Caco-2 (cell line): ENCODE measurements at regions of chr2 and their contacts with region 1.

Region 1: DNA sequence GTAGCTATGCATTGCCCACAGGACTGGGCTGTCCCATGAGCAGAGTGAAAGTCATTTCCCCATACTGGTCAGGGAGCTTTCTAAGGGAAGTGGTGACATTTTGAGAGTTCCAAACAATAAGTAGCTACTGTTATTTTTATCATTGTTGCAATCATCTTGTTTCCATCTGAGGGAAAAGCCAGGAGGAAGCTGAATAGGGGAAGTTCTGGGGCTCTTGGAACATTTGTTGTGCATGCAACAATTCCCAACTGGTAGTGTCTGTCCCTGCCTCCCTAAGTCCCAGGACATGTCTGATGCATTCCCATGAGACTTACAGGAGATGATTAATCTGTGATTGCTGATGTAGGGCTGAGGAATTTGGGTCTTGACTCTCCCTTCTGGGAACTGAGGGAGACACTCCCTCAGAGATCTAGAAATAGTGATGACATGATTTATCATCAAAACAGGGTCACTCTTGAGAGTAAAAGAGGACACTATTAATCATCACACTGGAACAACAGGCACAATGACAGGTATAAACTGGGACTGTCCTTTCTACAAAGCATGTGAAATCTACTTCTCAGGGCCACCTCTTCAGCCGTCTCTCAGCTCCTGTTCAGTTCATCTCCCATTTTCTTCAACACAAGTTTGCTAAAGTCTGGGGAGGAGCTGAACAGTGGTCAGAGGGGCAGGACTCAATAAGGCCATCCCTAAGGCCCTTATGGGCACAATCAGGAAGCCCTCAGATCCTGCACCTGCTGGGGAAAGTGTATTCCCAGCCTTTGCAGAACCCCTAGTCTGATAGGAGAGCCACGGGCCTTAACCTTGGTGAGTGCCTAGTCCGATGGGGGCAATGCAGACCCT is 28.0 kb upstream of the MARCO start:
- DNase-seq: no peak
- H3K4me3 ChIP-seq: no peak overlapping the region
- H3K4me3 Mint-ChIP-seq: peak overlapping the region; percentile 48
- H3K27ac Mint-ChIP-seq: peak overlapping the region; percentile 83
- H3K4me1 ChIP-seq: peaks cover 23% of the 10 kb centered on the region
- H3K4me1 Mint-ChIP-seq: peaks cover 18% of the 10 kb centered on the region
- H3K27me3 ChIP-seq: no peaks in the 10 kb centered on the region
- H3K27me3 Mint-ChIP-seq: no peaks in the 10 kb centered on the region
- CTCF ChIP-seq: no peak

Region 2: GRCh38 chr2:118830121-118830520 is 83.9 kb before region 1 on chr2:
- CTCF ChIA-PET with region 1: no interaction called
- POLR2A ChIA-PET with region 1: no interaction called
- intact Hi-C with region 1: no loop called
- DNase-seq: no peak
- H3K4me3 ChIP-seq: no peak overlapping the region
- H3K4me3 Mint-ChIP-seq: no peak overlapping the region
- H3K27ac Mint-ChIP-seq: no peak overlapping the region
- H3K4me1 ChIP-seq: no peaks in the 10 kb centered on the region
- H3K4me1 Mint-ChIP-seq: no peaks in the 10 kb centered on the region
- H3K27me3 ChIP-seq: peaks cover 2% of the 10 kb centered on the region
- H3K27me3 Mint-ChIP-seq: peaks cover 20% of the 10 kb centered on the region
- CTCF ChIP-seq: no peak

Region 3: DNA sequence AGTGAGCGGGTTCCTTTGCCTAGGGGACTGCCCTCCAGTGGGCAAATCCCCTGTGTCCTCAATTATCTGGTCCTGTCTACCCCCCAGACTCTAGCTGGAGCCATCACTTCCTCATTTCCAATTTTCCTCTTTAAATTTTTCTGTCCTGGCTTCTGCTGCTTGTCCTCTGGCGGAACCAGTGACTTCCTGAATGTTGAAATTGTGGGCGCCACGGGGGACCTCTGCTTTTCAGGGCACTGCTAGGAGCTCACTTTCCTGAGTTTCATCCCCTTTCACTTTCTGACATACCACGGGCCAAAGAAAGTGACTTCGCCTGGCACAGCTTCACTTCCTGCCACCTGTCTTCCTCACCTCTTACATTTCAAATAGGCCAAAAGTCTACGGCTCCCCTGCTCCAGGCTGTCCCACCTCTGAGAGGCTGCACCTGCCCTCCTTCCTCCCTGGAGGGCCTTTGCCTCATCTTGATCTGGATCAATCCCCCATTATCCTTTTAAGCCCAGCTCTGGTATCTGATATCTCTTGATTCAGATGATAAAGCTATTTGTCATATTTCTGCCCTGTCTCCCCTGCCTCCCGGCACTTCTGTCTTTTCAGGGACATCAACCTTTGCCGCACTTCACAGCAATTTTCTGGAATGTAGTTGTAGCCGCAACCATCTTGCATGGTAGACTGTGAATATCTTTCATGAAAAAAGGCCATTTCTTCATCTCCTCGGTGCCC is 26.6 kb after region 1 on chr2:
- CTCF ChIA-PET with region 1: no interaction called
- POLR2A ChIA-PET with region 1: no interaction called
- intact Hi-C with region 1: loop called (anchors 1 kb)
- DNase-seq: no peak
- H3K4me3 ChIP-seq: no peak overlapping the region
- H3K4me3 Mint-ChIP-seq: no peak overlapping the region
- H3K27ac Mint-ChIP-seq: no peak overlapping the region
- H3K4me1 ChIP-seq: no peaks in the 10 kb centered on the region; the same call in 1 of the 2 replicates
- H3K4me1 Mint-ChIP-seq: no peaks in the 10 kb centered on the region
- H3K27me3 ChIP-seq: no peaks in the 10 kb centered on the region
- H3K27me3 Mint-ChIP-seq: no peaks in the 10 kb centered on the region
- CTCF ChIP-seq: no peak

Region 4: DNA sequence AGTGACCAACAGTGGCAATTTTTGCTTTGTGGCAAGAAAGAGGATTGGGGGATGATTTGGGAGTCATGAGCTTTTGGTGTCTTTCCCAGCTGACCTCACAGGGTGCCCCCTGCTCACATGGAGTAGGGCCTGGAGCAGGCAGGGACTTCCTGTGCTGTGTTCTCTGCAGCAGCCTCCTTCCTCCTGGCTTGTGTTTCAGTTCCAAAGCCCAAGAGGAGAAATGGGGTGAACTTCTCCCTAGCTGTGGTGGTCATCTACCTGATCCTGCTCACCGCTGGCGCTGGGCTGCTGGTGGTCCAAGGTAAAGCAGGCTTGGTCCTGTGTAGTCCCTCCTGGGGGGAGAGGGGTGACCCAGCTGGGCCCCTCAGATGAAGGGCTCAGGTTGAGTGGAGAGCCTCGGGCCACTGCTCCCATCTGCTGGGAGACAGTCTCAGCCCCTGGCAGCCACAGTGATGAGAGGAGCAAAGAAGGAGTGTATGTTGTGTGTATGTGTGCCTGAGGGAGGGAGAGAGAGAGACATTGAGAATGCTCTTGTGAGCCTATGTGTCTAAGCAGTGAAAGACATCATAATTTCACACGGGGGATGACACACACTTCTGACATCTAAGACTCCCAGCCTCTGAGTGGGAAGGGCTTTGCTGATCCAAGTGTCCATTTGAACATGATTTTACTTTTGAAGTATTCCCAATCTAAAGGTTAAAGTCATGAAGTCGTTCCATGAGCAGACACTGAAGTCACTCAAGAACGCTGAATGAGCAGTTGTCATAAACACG is 55.1 kb after region 1 on chr2:
- CTCF ChIA-PET with region 1: no interaction called
- POLR2A ChIA-PET with region 1: no interaction called
- intact Hi-C with region 1: loop called (anchors 5 kb)
- DNase-seq: no peak
- H3K4me3 ChIP-seq: no peak overlapping the region
- H3K4me3 Mint-ChIP-seq: no peak overlapping the region
- H3K27ac Mint-ChIP-seq: no peak overlapping the region
- H3K4me1 ChIP-seq: 0 out of 2 replicates have a peak, but pooled peaks cover 6% of the 10 kb centered on the region
- H3K4me1 Mint-ChIP-seq: peaks cover 6% of the 10 kb centered on the region
- H3K27me3 ChIP-seq: no peaks in the 10 kb centered on the region
- H3K27me3 Mint-ChIP-seq: peaks cover 4% of the 10 kb centered on the region
- CTCF ChIP-seq: no peak